Activated naive CD4-positive, alpha-beta T cell treated with anti-CD3 and anti-CD28 coated beads for 36 hours (primary cell): ENCODE measurements at regions of chr11 and their contacts with region 1.

Region 1: DNA sequence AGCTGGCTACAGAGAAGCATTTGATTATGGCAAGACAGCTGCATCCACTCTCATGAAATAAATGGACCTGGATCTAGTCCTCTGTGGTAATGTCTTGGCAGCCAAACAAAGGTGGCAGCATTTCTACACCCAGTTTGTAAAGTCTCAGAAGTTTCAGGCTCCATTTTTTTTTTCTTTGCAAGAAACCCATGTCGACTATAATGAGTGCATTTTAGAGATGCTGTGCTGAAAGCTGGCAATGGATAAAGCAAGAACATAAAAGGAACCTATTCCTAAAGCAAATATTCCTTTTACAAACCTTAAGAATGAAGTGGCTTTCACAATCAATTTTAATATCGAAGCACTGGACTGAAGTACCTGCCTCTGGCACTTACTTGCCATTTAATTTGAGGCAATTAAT is 33.5 kb downstream of the THAP12 start:
- DNase-seq: no peak
- H3K4me3 Mint-ChIP-seq: no peak overlapping the region
- H3K27ac Mint-ChIP-seq: no peak overlapping the region
- H3K4me1 Mint-ChIP-seq: no peaks in the 10 kb centered on the region
- H3K27me3 Mint-ChIP-seq: no peaks in the 10 kb centered on the region

Region 2: DNA sequence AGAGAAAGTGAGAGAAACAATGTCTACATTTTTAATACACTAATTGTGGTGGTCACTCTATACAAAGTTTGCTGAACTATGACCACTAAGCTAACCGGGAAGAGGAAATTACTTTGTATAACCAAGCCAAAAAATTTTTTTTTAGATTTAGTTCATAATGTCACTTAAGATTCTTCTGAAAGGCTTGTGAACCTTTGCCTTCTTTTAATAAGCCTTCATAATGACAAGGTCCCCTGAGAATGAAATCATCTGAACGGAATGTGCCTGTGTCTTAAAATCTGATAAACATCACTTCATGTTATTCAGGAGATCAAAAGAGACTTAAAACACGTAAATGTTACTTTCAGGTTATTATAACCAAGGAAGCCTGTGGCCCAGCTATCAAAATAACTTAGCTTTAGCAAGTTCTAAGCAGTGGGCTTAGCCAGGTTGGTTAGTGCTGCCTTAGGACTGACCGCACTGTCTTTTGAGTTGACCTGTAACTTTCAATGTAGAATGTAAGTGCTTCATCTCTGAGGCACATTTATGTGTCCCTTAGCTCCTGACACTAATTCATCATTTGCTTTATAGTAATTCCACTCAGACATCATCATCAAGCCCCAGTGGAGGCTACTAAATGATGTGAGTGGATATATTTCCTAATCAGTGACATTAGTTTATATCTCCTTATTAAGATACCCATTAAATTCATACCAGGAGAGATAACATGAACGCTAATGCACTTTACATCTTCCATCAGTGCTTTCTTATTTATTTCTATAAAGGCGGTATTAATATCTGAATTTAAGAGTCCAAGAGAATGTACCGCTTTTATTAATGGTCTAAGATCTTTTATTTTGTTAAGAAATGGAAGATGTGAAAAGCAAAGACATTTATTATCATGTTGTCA is 263.7 kb before region 1 on chr11:
- CTCF ChIA-PET with region 1: no interaction called
- intact Hi-C with region 1: no loop called
- DNase-seq: no peak
- H3K4me3 Mint-ChIP-seq: no peak overlapping the region
- H3K27ac Mint-ChIP-seq: no peak overlapping the region
- H3K4me1 Mint-ChIP-seq: no peaks in the 10 kb centered on the region
- H3K27me3 Mint-ChIP-seq: no peaks in the 10 kb centered on the region

Region 3: GRCh38 chr11:76419896-76420295 is 72.4 kb after region 1 on chr11:
- CTCF ChIA-PET with region 1: no interaction called
- intact Hi-C with region 1: loop called (anchors 5 kb)
- DNase-seq: peak; percentile 32
- H3K4me3 Mint-ChIP-seq: no peak overlapping the region
- H3K27ac Mint-ChIP-seq: no peak overlapping the region
- H3K4me1 Mint-ChIP-seq: peaks cover 7% of the 10 kb centered on the region
- H3K27me3 Mint-ChIP-seq: peaks cover 5% of the 10 kb centered on the region